Ascending aorta (tissue), 2 donors: ENCODE measurements at regions of chr17 and their contacts with region 1.

Region 1: DNA sequence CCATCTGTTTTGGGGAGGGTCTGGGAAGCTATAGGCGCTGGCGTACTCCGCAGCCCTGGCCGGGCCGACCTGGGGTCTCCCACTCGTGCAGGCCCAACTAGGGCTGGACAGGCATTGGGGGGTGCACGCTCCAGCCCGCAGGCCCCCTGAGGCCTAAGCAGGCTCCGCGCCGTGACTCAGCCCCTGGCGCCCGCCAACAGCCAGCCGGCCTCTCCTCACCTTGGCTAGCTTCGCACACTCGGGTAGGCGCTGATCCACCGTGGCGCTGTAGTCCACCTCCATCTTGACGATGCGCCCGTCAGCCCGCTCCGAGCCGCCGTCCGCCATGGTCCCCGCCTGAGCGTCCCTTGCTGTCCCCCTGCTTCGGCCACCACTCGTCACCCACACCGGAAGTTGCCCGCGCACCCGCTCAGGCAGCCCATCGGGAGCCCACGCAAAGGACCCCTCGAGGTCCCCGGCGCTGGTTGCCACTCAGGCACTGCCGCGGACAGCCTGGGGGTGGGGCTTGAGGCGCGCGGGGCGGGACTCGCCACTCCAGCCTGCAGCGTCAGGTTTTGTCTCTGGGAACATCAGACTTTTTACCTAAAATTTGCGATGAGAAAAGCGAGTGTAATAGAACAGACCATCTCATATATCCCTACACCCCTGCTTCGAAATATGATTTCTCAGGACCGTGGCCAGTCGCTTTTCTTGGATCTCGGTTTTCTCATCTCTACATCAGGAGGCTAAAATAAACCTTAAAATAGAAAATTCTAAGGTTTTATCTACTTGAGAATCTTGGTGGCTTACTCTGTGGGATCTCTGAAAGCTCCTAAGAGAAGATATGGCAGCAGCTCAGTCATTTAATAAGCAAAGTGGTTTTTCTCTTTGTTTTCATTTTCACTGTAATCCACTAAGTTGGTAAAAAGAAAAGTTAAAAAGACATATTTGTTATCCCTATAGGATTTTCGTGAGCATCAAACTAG is at the start of gene PSMD12:
- DNase-seq: peak; percentile 74 to 96
- H3K4me3 ChIP-seq: peak within 1 kb of the TSS; percentile 90 to 96
- H3K27ac ChIP-seq: peak within 1 kb of the TSS; percentile 89 to 96
- H3K4me1 ChIP-seq: peaks cover 5 to 20% of the 10 kb centered on the region in 2 donors
- H3K27me3 ChIP-seq: no peaks in the 10 kb centered on the region
- CTCF ChIP-seq: peak in 1 of 3 experiments; percentile 7
- total RNA-seq, gene PSMD12: 31.8 TPM

Region 2: GRCh38 chr17:67183531-67183930 is 182.9 kb before region 1 on chr17:
- intact Hi-C with region 1: no loop called
- DNase-seq: no peak
- H3K4me3 ChIP-seq: no peak overlapping the region
- H3K27ac ChIP-seq: no peak overlapping the region
- H3K4me1 ChIP-seq: no peaks in the 10 kb centered on the region
- H3K27me3 ChIP-seq: no peaks in the 10 kb centered on the region
- CTCF ChIP-seq: no peak

Region 3: GRCh38 chr17:67245073-67245755 is 121.3 kb before region 1 on chr17 and contains the start of gene HELZ:
- intact Hi-C with region 1: loop called (anchors 10 kb)
- DNase-seq: peak in 1 of 2 donors; percentile 84
- H3K4me3 ChIP-seq: peak within 1 kb of the TSS; percentile 76 to 91
- H3K27ac ChIP-seq: peak within 1 kb of the TSS; percentile 44 to 66
- H3K4me1 ChIP-seq: peaks cover 0 to 15% of the 10 kb centered on the region in 2 donors
- H3K27me3 ChIP-seq: no peaks in the 10 kb centered on the region
- CTCF ChIP-seq: no peak
- total RNA-seq, gene HELZ: 36.1 TPM

Region 4: DNA sequence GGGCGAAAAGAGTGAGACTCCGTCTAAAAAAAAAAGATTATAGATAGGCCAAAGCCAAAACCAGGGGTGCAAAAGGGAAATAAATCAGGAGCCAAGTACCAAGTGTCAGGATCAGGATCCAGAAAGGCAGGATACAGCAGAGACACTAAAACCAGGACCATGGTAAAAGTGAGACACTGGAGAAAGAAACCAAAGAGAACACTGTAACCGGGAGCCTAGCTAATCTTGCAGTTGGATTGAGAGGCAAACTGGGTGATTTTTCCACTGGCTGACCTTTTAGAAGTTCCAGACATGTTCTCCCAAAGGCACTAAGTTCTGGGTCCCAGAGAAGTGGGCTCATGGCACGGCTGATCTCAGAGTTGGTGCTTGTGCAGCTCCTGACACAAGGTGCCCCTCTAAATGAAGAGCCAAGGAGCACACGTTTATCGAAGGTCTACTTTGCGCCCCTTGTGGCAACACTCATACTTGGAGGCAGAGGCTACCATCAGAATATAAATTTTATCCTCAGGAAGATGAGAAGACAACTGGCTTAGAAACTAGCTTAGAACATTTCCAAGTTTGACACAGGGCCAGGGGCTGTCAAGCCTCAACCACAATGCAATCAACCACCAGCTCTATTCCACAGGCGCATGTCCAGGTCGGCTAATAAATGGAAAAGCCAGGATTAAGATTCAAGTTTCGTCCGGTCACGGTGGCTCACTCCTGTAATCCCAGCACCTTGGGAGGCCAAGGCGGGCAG is 94.0 kb before region 1 on chr17:
- intact Hi-C with region 1: no loop called
- DNase-seq: no peak
- H3K4me3 ChIP-seq: no peak overlapping the region
- H3K27ac ChIP-seq: no peak overlapping the region
- H3K4me1 ChIP-seq: no peaks in the 10 kb centered on the region
- H3K27me3 ChIP-seq: no peaks in the 10 kb centered on the region
- CTCF ChIP-seq: no peak

Region 5: DNA sequence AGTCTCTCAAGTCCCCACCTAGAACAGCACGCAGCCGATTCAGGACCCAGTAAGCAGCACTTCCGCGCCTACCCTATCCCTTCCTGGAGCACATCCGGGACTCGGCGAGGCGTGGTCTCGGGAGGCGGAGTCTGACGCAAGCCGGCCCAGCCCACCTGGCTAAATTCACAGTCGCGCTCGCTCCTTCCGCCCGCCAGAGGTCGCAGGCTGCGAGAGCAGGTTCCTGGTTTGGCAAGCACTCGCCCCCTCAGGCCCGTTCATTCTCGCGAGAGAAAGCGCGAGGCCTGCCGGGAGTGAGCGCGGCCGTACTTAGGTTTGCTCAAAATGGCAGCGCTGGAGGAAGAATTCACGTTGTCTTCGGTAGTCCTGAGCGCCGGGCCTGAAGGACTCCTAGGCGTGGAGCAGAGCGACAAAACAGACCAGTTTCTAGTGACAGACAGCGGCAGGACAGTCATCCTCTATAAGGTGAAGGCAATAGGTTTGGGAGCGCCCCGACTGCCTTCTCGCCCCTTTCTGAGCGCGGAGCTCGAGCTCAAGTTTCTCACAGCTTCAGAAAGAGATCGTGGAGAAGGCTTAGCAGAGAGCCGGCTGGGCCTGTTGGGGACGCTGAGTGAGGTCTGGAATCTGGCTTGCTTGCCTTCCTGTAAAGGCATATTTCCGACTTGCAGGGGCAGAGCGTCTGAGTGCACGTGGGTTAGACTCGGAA is 351.3 kb after region 1 on chr17 and contains the start of gene NOL11:
- intact Hi-C with region 1: loop called (anchors 1 kb)
- DNase-seq: peak; percentile 95 to 100
- H3K4me3 ChIP-seq: peak within 1 kb of the TSS; percentile 91 to 97
- H3K27ac ChIP-seq: peak within 1 kb of the TSS; percentile 89 to 92
- H3K4me1 ChIP-seq: peaks cover 5 to 11% of the 10 kb centered on the region in 2 donors
- H3K27me3 ChIP-seq: no peaks in the 10 kb centered on the region
- CTCF ChIP-seq: peak; percentile 85 to 92 (median 87)
- total RNA-seq, gene NOL11: 22.0 TPM

Region 6: DNA sequence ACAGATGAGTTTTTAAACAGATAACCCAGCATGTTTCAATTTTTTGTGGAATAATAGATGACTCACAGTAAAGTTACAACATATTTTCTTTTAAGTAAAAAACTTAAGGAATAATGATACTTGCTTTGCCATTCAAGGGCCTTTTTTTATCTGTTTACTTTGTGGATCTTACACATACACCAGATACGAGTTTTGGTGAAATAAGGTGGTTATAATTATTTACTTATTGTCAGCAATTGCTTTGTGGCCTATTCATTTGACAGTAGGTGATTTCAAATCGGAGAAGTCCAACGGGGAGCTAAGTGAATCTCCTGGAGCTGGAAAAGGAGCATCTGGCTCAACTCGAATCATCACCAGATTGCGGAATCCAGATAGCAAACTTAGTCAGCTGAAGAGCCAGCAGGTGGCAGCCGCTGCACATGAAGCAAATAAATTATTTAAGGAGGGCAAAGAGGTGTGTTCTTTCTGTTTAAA is 525.1 kb after region 1 on chr17:
- intact Hi-C with region 1: no loop called
- DNase-seq: no peak
- H3K4me3 ChIP-seq: no peak overlapping the region
- H3K27ac ChIP-seq: no peak overlapping the region
- H3K4me1 ChIP-seq: no peaks in the 10 kb centered on the region
- H3K27me3 ChIP-seq: no peaks in the 10 kb centered on the region
- CTCF ChIP-seq: no peak